Naive thymus-derived CD4-positive, alpha-beta T cell (primary cell): ENCODE measurements at regions of chr10 and their contacts with region 1.

Region 1: GRCh38 chr10:1368842-1369171 is 312.6 kb downstream of the WDR37 start:
- DNase-seq: peak in 3 of 9 donors; percentile 5 to 21 (median 9)
- ATAC-seq: peak; percentile 36
- H3K4me3 ChIP-seq: no peak overlapping the region
- H3K4me3 Mint-ChIP-seq: no peak overlapping the region
- H3K27ac ChIP-seq: no peak overlapping the region
- H3K27ac Mint-ChIP-seq: no peak overlapping the region
- H3K4me1 ChIP-seq: no peaks in the 10 kb centered on the region
- H3K4me1 Mint-ChIP-seq: no peaks in the 10 kb centered on the region
- H3K27me3 ChIP-seq: no peaks in the 10 kb centered on the region
- H3K27me3 Mint-ChIP-seq: peaks cover 17 to 35% (median 32%) of the 10 kb centered on the region in 5 donors

Region 2: GRCh38 chr10:1142596-1142995 is 226.2 kb before region 1 on chr10:
- CTCF ChIA-PET with region 1: interaction called, 5 read pairs
- POLR2A ChIA-PET with region 1: no interaction called
- intact Hi-C with region 1: loop called in 1 of 2 experiments (anchors 1 kb)
- DNase-seq: peak in 2 of 9 donors; percentile 17 to 19
- ATAC-seq: no peak
- H3K4me3 ChIP-seq: no peak overlapping the region
- H3K4me3 Mint-ChIP-seq: no peak overlapping the region
- H3K27ac ChIP-seq: no peak overlapping the region
- H3K27ac Mint-ChIP-seq: no peak overlapping the region
- H3K4me1 ChIP-seq: no peaks in the 10 kb centered on the region
- H3K4me1 Mint-ChIP-seq: no peaks in the 10 kb centered on the region
- H3K27me3 ChIP-seq: no peaks in the 10 kb centered on the region
- H3K27me3 Mint-ChIP-seq: peaks cover 7 to 40% (median 16%) of the 10 kb centered on the region in 5 donors